BJ (cell line): ENCODE measurements at regions of chr11 and their contacts with region 1.

Region 1: GRCh38 chr11:131025020-131025419 is 108.7 kb upstream of the SNX19 start:
- DNase-seq: no peak
- H3K4me3 ChIP-seq: no peak overlapping the region
- H3K27me3 ChIP-seq: no peaks in the 10 kb centered on the region
- CTCF ChIP-seq: peak; percentile 77

Region 2: DNA sequence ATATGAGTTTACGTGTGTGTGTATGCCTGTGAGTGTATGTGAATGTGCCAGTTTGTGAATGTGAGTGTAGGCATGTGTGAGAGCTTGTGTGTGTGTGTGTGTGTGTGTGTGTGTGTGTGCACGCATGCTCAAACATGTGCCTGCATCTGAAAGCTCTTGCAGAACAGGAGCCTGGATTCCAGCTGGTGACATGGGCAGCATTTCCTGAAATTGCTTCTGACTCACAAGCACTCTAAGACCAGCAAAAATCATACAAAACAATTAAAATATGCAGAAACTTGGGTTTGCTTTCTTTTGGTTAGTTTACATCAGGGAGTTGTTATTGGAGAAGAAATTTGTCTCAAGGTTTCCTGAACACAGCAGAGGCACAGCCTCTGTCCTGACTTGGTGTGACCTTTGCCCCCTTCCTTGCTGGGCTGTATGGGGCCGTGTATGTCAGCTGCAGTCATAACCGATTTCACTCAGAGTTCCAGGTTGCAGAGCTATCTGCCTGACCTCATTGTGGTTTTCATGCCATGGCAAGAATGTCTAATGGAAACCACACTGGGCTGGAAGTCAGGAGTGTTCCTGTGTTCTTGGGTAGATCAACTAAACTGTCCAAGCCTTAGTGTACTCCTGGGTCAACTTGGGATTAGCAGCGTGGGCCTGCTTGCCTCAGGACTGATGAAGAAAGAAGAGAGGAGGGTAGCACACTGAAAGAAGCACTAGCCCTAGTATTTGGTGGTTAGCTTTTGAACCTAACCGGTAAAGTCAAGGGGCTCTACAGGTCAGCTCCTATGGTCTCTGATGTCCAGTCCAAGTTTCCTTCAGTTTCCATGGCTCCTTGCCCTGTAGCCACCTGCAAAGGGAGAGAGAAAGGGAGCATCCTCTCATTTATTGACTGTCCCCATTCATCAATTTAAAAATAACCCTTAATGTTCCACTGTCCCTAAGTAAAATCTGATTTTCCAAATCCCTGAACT is 252.5 kb before region 1 on chr11:
- CTCF ChIA-PET with region 1: no interaction called
- POLR2A ChIA-PET with region 1: no interaction called
- DNase-seq: peak; percentile 83
- H3K4me3 ChIP-seq: no peak overlapping the region
- H3K27me3 ChIP-seq: no peaks in the 10 kb centered on the region
- CTCF ChIP-seq: no peak

Region 3: DNA sequence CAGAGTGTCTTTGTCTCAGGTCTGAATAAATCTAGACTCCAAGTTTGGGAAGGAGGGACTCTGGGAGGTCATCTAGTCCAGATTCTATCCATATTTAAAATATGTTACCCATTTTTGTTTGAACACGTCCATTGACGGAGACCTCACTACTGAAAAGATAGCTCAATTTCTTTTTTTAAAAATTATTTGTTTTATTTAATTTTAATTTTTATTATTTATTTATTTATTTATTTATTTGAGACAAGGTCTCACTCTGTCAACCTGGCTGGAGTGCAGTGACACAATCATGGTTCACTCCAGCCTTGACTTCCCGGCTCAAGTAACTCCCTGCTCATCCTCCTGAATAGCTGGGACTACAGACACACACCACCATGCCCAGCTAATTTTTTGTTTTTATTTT is 19.2 kb before region 1 on chr11:
- CTCF ChIA-PET with region 1: interaction called, 12 read pairs
- POLR2A ChIA-PET with region 1: no interaction called
- DNase-seq: no peak
- H3K4me3 ChIP-seq: no peak overlapping the region
- H3K27me3 ChIP-seq: no peaks in the 10 kb centered on the region
- CTCF ChIP-seq: no peak